Lower leg skin (tissue), 4 donors: ENCODE measurements at regions of chr14 and their contacts with region 1.

Region 1: GRCh38 chr14:23379366-23380196 is 2.7 kb downstream of the CMTM5 start:
- DNase-seq: peak; percentile 42 to 90
- H3K4me3 ChIP-seq: no peak overlapping the region
- CTCF ChIP-seq: peak in 1 of 3 donors; percentile 61
- POLR2A ChIP-seq: no peak

Region 2: GRCh38 chr14:23269193-23269592 is 110.4 kb before region 1 on chr14:
- intact Hi-C with region 1: loop called (anchors 10 kb)
- DNase-seq: no peak
- H3K4me3 ChIP-seq: no peak overlapping the region
- CTCF ChIP-seq: no peak
- POLR2A ChIP-seq: no peak

Region 3: GRCh38 chr14:23327947-23328744 is 51.4 kb before region 1 on chr14:
- intact Hi-C with region 1: loop called (anchors 5 kb)
- DNase-seq: peak; percentile 65 to 91
- H3K4me3 ChIP-seq: no peak overlapping the region
- CTCF ChIP-seq: peak in 1 of 3 donors; percentile 70
- POLR2A ChIP-seq: no peak

Region 4: GRCh38 chr14:23751616-23752015 is 372.0 kb after region 1 on chr14:
- intact Hi-C with region 1: no loop called
- DNase-seq: no peak
- H3K4me3 ChIP-seq: no peak overlapping the region
- CTCF ChIP-seq: no peak
- POLR2A ChIP-seq: no peak